ENCODE measurements at regions of chr1 and their contacts with region 1.

Region 1: DNA sequence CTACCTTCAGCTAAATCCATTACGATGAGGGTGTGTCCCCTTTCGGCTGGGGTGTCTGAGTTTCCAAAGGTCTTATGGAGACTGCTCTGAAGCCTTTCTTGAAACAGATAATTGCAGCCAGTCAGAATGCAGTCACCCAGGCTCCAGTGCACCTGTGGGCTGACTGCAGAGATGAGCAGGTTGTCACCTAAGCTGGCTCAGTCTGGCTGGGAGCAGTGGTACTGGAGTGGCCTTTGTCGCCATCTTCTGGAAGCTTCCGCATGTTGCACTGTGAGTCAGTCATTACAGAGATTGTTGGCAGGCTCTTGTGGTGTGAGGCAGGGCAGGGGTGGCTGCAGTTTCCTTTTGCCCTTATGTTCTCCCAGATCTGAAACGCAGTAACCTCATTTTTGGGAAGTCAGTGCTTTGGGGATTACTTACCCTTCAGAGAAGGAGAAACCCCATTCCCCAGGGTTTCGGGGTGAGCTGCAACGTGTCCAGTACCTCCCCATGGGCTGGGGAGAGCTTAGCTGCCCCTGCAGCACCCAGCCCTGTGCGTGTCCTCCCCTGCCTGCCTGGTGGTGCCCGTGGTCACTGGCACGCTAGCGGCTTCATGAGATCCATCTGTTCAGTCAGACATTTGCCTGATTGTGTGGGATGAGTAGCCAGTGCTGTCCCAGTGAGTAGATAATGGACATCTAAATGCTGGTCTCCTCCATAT is 48.0 kb downstream of the SMYD2 start:
- DNase-seq: peak; percentile 90
- ATAC-seq: peak; percentile 84
- H3K4me3 Mint-ChIP-seq: no peak overlapping the region
- H3K27ac Mint-ChIP-seq: no peak overlapping the region
- H3K4me1 Mint-ChIP-seq: peaks cover 15% of the 10 kb centered on the region
- H3K27me3 Mint-ChIP-seq: no peaks in the 10 kb centered on the region
- CTCF ChIP-seq: peak; percentile 85

Region 2: GRCh38 chr1:214205053-214205452 is 123.9 kb before region 1 on chr1:
- CTCF ChIA-PET with region 1: interaction called, 45 read pairs
- POLR2A ChIA-PET with region 1: no interaction called
- DNase-seq: no peak
- ATAC-seq: no peak
- H3K4me3 Mint-ChIP-seq: no peak overlapping the region
- H3K27ac Mint-ChIP-seq: no peak overlapping the region
- H3K4me1 Mint-ChIP-seq: peaks cover 23% of the 10 kb centered on the region
- H3K27me3 Mint-ChIP-seq: no peaks in the 10 kb centered on the region; the same call in 1 of the 2 replicates
- CTCF ChIP-seq: no peak

Region 3: DNA sequence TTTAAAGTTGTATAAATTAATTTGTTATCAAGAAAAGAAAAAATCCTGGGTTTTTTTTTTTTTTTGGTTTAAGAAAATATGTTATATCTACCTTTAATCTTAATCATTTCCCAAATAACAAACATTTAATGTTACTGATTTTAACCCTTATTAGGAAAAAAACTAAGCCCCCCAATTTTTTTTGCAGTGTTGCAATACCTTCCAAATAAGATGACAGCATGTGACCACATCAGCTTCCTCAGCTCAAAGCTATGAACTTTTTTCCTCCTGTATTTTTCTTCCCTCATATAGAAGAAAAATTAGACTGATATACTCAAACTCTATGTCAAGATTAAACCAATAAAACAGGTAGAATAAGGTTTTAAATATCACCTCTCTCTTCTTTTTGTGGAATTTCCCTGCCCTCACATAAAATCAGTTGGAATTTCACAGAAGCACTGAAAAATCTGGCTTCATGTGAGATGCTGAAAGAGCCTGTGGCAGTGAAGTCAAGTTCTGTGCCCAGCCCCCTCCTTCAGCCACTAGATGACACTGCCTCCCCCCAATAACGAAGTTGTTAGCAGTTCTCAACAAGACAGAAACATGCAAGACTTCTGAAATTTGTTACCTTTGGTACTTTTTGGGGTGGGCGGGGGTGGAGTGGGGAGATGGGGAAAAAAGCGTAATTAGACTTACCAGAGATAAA is 57.6 kb before region 1 on chr1:
- CTCF ChIA-PET with region 1: interaction called, 52 read pairs
- POLR2A ChIA-PET with region 1: no interaction called
- DNase-seq: peak; percentile 24
- ATAC-seq: peak; percentile 75
- H3K4me3 Mint-ChIP-seq: no peak overlapping the region
- H3K27ac Mint-ChIP-seq: no peak overlapping the region
- H3K4me1 Mint-ChIP-seq: peaks cover 9% of the 10 kb centered on the region
- H3K27me3 Mint-ChIP-seq: peaks cover 3% of the 10 kb centered on the region; the same call in 1 of the 2 replicates
- CTCF ChIP-seq: no peak

Region 4: GRCh38 chr1:214310777-214311690 is 17.9 kb before region 1 on chr1:
- CTCF ChIA-PET with region 1: interaction called, 182 read pairs
- POLR2A ChIA-PET with region 1: no interaction called
- DNase-seq: no peak
- ATAC-seq: no peak
- H3K4me3 Mint-ChIP-seq: no peak overlapping the region
- H3K27ac Mint-ChIP-seq: no peak overlapping the region
- H3K4me1 Mint-ChIP-seq: peaks cover 41% of the 10 kb centered on the region
- H3K27me3 Mint-ChIP-seq: peaks cover 50% of the 10 kb centered on the region
- CTCF ChIP-seq: no peak

Region 5: DNA sequence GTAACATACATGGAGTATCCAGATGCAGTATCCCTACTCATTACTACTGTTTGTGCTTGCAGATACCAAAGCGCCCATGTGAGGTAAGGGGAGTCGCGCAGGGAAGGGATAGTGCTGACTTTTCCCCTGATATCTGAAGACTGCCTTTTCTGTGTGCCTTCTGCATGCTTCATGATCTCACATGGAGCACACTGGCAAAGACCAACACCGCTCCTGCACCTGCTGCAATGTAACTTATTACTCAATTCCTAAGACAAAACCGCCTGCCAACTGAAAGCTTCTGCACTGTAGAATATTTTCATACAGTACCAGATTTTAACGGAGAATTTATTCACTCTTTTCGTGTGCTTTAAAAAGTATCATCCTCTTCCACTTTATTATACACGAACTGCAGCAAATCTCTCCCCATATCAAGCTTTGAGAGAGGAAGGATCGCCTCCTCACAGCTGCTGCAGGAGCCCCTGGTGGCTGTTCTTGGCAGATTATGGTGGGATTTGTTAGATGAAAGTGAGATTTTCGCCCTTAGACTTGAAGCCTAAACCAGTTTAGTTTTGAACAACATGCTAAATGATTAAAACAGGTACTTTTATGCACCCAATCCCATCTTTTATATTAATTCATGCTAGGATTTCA is 123.3 kb after region 1 on chr1:
- CTCF ChIA-PET with region 1: interaction called, 10 read pairs
- POLR2A ChIA-PET with region 1: no interaction called
- DNase-seq: no peak
- ATAC-seq: peak; percentile 19; the same call in 1 of the 2 replicates
- H3K4me3 Mint-ChIP-seq: peak overlapping the region; percentile 31
- H3K27ac Mint-ChIP-seq: peak overlapping the region; percentile 75
- H3K4me1 Mint-ChIP-seq: peaks cover 65% of the 10 kb centered on the region
- H3K27me3 Mint-ChIP-seq: no peaks in the 10 kb centered on the region
- CTCF ChIP-seq: no peak

Region 6: DNA sequence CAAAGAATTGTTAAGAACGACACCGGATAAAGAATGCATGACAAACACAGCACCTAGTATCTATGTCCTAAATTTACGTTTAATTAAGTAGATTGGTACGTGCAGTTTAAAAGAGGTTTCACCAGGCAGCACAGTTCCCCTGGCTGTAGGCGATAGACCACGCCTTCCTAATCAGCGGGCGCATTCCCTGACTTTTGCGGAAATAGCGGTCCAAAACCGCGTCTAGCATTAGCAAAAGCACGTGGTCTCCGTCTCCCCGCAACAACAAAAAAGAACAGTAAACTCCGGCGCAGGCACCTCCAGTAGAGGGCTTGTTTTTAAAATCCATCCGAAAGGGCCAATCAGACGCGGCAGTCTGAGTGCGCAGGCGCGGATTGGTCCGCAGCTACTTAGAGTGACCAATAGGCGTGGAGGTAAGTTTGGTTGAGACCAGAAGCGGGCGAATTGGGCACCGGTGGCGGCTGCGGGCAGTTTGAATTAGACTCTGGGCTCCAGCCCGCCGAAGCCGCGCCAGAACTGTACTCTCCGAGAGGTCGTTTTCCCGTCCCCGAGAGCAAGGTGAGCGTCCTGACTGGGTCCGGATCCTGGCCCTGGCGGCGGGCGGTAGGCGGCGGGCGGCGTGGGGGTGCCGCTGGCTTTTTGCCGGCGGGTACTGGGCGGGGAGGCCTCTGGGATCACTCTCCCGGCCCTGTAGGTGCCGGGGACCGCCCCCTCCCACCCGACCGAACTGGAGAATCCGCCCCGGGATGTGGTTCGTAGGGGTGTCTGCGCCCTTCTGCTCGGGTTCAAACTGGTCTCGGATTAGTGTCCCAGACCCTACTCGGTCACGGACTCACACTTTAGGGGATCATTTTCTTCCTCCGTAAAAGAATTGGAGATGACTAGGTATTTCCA is 274.1 kb after region 1 on chr1 and contains the start of gene CENPF:
- CTCF ChIA-PET with region 1: interaction called, 18 read pairs
- POLR2A ChIA-PET with region 1: no interaction called
- DNase-seq: peak; percentile 96
- ATAC-seq: peak; percentile 96
- H3K4me3 Mint-ChIP-seq: peak within 1 kb of the TSS; percentile 96
- H3K27ac Mint-ChIP-seq: peak within 1 kb of the TSS; percentile 90
- H3K4me1 Mint-ChIP-seq: peaks cover 19% of the 10 kb centered on the region
- H3K27me3 Mint-ChIP-seq: peaks cover 3% of the 10 kb centered on the region
- CTCF ChIP-seq: no peak
- total RNA-seq, gene CENPF: 137 to 166 TPM (median 143 TPM) in 3 replicates